ENCODE measurements at regions of chr4 and their contacts with region 1.

Region 1: GRCh38 chr4:149980941-149981340 is 97.3 kb upstream of the DCLK2 start:
- DNase-seq: no peak
- ATAC-seq: no peak
- H3K4me3 ChIP-seq: no peak overlapping the region
- H3K27ac ChIP-seq: no peak overlapping the region
- H3K4me1 ChIP-seq: no peaks in the 10 kb centered on the region
- H3K27me3 ChIP-seq: no peaks in the 10 kb centered on the region
- CTCF ChIP-seq: peak in 4 of 5 experiments; percentile 28 to 70 (median 52)
- POLR2A ChIP-seq: no peak

Region 2: GRCh38 chr4:149630079-149630478 is 350.9 kb before region 1 on chr4:
- in situ Hi-C with region 1: no loop called
- intact Hi-C with region 1: no loop called
- DNase-seq: no peak
- ATAC-seq: no peak
- H3K4me3 ChIP-seq: no peak overlapping the region
- H3K27ac ChIP-seq: no peak overlapping the region
- H3K4me1 ChIP-seq: no peaks in the 10 kb centered on the region
- H3K27me3 ChIP-seq: no peaks in the 10 kb centered on the region
- CTCF ChIP-seq: no peak
- POLR2A ChIP-seq: no peak

Region 3: DNA sequence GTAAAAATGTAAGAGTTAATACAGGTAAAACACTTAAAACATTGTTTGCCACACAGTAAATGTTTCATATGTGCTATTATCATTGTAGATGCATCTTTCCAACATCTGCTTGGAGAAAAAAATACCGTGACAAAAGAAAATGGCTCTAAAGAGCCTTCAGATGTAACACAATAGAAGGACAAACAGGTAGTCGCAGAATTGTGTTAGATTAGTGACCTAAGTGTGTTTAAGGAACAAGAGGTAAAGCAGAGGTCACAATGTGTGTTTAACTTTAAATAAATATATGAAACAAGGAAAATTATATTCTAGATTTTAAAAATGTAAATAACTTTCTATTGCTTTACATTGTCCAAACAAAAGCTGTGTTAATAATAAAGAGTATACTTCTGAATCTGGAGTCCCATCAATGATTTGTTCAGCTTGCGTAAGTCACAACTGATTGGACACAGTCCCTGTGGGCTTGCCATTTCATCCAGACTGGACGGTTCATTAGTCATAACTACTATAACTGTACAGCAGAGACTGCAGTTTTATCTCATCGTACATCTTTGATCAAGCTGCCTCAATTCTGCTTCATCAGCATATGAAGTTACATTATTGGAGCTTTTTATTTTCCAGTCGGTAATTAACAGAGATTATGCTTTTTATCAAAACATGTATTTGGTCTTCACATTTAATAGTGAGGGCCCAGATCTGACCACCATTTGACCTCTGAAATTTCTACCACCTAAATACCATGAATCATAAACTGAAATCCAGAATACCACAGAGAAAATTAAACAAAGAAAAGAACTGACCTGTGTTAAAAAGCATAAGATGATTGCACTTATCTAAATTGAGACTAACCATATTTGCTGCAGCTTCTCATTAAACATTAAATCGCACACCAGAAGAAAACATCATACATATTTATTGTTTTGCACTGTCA is 588.4 kb after region 1 on chr4:
- in situ Hi-C with region 1: no loop called
- intact Hi-C with region 1: no loop called
- DNase-seq: no peak
- ATAC-seq: no peak
- H3K4me3 ChIP-seq: no peak overlapping the region
- H3K27ac ChIP-seq: no peak overlapping the region
- H3K4me1 ChIP-seq: no peaks in the 10 kb centered on the region
- H3K27me3 ChIP-seq: no peaks in the 10 kb centered on the region
- CTCF ChIP-seq: no peak
- POLR2A ChIP-seq: no peak

Region 4: DNA sequence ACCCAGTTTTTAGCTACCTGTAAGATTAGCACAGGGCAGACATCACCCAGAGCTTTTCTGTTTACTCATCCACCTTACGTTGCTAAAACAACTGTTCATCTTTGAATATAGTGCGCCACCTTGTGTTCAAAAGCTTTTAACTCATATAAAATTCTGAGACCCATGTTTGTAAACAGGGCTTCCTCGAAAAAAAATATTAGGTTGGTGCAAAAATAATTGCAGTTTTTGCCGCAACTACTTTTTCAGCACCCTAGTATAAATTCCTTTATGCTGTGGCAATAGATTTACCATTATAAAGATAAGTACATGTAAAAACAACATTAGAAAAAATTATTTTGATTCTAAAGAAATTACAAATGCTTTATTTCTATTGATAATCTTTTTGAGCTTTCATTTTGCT is 886.2 kb after region 1 on chr4:
- in situ Hi-C with region 1: loop called (anchors 10 to 25 kb)
- intact Hi-C with region 1: loop called (anchors 5 kb)
- DNase-seq: no peak
- ATAC-seq: peak; percentile 76 to 91
- H3K4me3 ChIP-seq: no peak overlapping the region
- H3K27ac ChIP-seq: no peak overlapping the region
- H3K4me1 ChIP-seq: no peaks in the 10 kb centered on the region
- H3K27me3 ChIP-seq: no peaks in the 10 kb centered on the region
- CTCF ChIP-seq: peak; percentile 40 to 61 (median 53)
- POLR2A ChIP-seq: no peak

Region 5: DNA sequence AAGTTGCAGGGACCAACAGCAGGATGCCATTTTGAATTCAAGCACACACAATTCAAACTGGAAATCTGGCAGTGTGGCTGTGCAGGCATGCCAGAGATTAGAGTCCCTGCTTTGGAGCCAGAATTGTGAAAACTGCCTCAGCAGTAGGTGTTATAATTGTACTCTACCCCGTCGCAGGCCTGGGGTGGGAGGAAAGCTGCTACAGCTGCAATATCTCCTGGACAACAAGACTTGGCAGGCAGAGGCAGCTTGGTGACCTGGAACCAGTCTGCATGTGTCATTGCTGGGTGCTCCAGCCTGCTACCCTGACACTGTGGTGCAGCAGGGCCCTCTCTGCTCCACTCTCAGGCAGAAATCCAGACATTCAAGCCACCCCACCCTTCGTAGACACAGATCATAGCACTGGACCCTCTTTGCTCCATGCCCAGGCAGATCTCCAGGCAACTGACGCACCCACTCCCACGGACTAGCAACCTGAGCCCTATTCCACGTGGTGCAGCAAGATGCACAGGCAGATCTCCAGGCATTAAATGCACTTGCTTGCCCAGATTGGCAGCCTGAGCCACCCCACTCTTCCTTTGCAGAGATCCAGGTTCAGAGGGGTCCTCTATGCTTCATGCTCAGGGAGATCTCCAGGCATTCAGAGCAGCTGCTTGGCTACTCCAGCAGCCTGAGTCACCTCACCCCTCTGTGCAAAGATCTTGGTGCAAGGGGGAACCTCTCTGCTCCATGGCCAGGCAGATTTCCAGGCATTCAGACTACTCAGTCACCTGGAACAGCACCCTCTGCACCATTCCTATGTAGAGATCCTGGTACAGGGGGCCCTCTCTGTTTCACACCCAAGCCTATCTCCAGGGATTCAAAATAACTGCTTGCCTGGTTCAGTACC is 893.6 kb after region 1 on chr4:
- in situ Hi-C with region 1: loop called (anchors 10 to 25 kb)
- intact Hi-C with region 1: loop called (anchors 5 kb)
- DNase-seq: peak; percentile 2 to 25
- ATAC-seq: peak; percentile 33 to 65
- H3K4me3 ChIP-seq: no peak overlapping the region
- H3K27ac ChIP-seq: peak overlapping the region in 2 of 4 donors; percentile 2 to 29
- H3K4me1 ChIP-seq: no peaks in the 10 kb centered on the region
- H3K27me3 ChIP-seq: no peaks in the 10 kb centered on the region
- CTCF ChIP-seq: no peak
- POLR2A ChIP-seq: no peak